Activated B cell treated with CpG ODN at 0.5 μM for 24 hours (primary cell): ENCODE measurements at regions of chr4 and their contacts with region 1.

Region 1: GRCh38 chr4:80007745-80008149 is 65.3 kb downstream of the ANTXR2 start:
- DNase-seq: no peak
- ATAC-seq: peak; percentile 31
- H3K4me3 Mint-ChIP-seq: no peak overlapping the region
- H3K27ac Mint-ChIP-seq: no peak overlapping the region
- H3K4me1 Mint-ChIP-seq: peaks cover 20% of the 10 kb centered on the region
- H3K27me3 Mint-ChIP-seq: no peaks in the 10 kb centered on the region
- CTCF ChIP-seq: no peak

Region 2: GRCh38 chr4:80022282-80022681 is 14.5 kb after region 1 on chr4:
- CTCF ChIA-PET with region 1: no interaction called
- POLR2A ChIA-PET with region 1: no interaction called
- intact Hi-C with region 1: loop called (anchors 2 kb)
- DNase-seq: no peak
- ATAC-seq: no peak
- H3K4me3 Mint-ChIP-seq: no peak overlapping the region
- H3K27ac Mint-ChIP-seq: no peak overlapping the region
- H3K4me1 Mint-ChIP-seq: peaks cover 3% of the 10 kb centered on the region
- H3K27me3 Mint-ChIP-seq: no peaks in the 10 kb centered on the region
- CTCF ChIP-seq: no peak